ENCODE measurements at regions of chr14 and their contacts with region 1.

Region 1: GRCh38 chr14:60064491-60065072 is 27.1 kb upstream of the PCNX4 start:
- DNase-seq: peak; percentile 55
- ATAC-seq: peak; percentile 74
- H3K4me3 ChIP-seq: no peak overlapping the region
- H3K27ac ChIP-seq: no peak overlapping the region
- H3K4me1 ChIP-seq: no peaks in the 10 kb centered on the region
- H3K27me3 ChIP-seq: no peaks in the 10 kb centered on the region; the same call in 1 of the 2 replicates
- CTCF ChIP-seq: peak; percentile 74
- POLR2A ChIP-seq: no peak
- RAD21 ChIP-seq: peak; percentile 76

Region 2: DNA sequence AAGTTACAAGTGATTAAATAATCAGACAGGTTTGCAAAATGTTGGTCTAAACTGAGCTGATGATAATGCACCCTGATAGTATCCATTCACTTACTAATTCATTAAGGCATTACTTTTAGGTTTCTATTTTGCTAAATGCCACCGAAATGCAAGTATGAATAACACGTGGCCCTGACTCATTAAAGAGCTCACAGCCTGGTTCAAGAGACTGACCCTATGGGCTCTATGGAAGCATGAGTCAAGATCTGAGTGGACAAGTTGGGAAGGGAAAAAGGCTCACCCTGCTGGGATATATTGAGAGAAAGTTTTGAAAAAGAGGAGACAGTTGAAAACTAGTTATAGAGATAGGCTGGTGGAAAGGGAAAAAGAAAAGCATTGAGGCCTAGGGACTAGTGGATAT is 159.4 kb before region 1 on chr14:
- CTCF ChIA-PET with region 1: no interaction called
- POLR2A ChIA-PET with region 1: no interaction called
- dilution Hi-C with region 1: no loop called
- in situ Hi-C with region 1: no loop called
- intact Hi-C with region 1: no loop called
- DNase-seq: peak; percentile 13
- ATAC-seq: no peak
- H3K4me3 ChIP-seq: no peak overlapping the region
- H3K27ac ChIP-seq: no peak overlapping the region
- H3K4me1 ChIP-seq: no peaks in the 10 kb centered on the region
- H3K27me3 ChIP-seq: no peaks in the 10 kb centered on the region
- CTCF ChIP-seq: no peak
- POLR2A ChIP-seq: no peak
- RAD21 ChIP-seq: no peak

Region 3: GRCh38 chr14:59964251-59965007 is 100.2 kb before region 1 on chr14:
- CTCF ChIA-PET with region 1: no interaction called
- POLR2A ChIA-PET with region 1: no interaction called
- dilution Hi-C with region 1: no loop called
- in situ Hi-C with region 1: no loop called
- intact Hi-C with region 1: loop called (anchors 10 kb)
- DNase-seq: peak; percentile 31
- ATAC-seq: peak; percentile 69
- H3K4me3 ChIP-seq: no peak overlapping the region
- H3K27ac ChIP-seq: no peak overlapping the region
- H3K4me1 ChIP-seq: no peaks in the 10 kb centered on the region
- H3K27me3 ChIP-seq: no peaks in the 10 kb centered on the region
- CTCF ChIP-seq: no peak
- POLR2A ChIP-seq: no peak
- RAD21 ChIP-seq: no peak

Region 4: GRCh38 chr14:60014402-60014801 is 50.2 kb before region 1 on chr14:
- CTCF ChIA-PET with region 1: no interaction called
- POLR2A ChIA-PET with region 1: no interaction called
- dilution Hi-C with region 1: no loop called
- in situ Hi-C with region 1: no loop called
- intact Hi-C with region 1: no loop called
- DNase-seq: no peak
- ATAC-seq: no peak
- H3K4me3 ChIP-seq: no peak overlapping the region
- H3K27ac ChIP-seq: no peak overlapping the region
- H3K4me1 ChIP-seq: no peaks in the 10 kb centered on the region
- H3K27me3 ChIP-seq: no peaks in the 10 kb centered on the region
- CTCF ChIP-seq: no peak
- POLR2A ChIP-seq: no peak
- RAD21 ChIP-seq: no peak

Region 5: GRCh38 chr14:60164712-60165546 is 100.3 kb after region 1 on chr14 and contains the start of gene DHRS7:
- CTCF ChIA-PET with region 1: interaction called, 11 read pairs
- POLR2A ChIA-PET with region 1: interaction called, 5 read pairs
- dilution Hi-C with region 1: no loop called
- in situ Hi-C with region 1: no loop called
- intact Hi-C with region 1: loop called (anchors 1 kb)
- DNase-seq: peak; percentile 71
- ATAC-seq: peak; percentile 99
- H3K4me3 ChIP-seq: peak within 1 kb of the TSS; percentile 98
- H3K27ac ChIP-seq: peak within 1 kb of the TSS; percentile 82
- H3K4me1 ChIP-seq: peaks cover 6% of the 10 kb centered on the region
- H3K27me3 ChIP-seq: no peaks in the 10 kb centered on the region
- CTCF ChIP-seq: peak; percentile 49
- POLR2A ChIP-seq: peak; percentile 69
- RAD21 ChIP-seq: peak; percentile 52
- total RNA-seq, gene DHRS7: 50.2 and 56.7 TPM in 2 replicates

Region 6: DNA sequence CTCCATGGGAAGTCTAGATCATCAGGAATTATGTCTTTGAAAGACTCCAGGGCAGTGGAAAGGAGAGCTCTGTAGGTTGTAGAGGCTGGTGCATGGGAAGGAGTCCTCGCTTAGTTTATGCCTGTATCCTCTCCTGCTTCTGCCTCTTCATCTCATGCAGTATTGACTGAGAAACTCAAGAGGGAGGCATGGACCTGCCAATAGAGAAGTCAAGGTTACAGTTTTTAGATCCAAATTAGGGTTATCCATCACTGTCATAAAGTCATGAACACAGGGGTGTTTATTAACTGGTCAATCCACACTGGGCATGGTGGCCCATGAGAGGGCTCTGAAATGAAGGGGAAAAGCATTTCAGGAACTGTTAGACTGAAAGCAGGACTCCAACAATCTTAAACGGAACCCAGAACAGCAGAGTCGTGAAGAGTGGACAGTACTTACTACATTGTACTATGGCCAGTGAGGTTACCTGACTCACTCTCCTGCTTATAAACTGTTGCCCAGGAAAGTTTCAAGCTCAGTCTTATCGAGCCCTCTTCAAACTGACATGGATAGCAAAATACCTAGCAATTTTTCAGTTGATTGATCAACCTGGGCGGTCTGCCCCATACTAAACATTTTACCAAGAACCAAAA is 130.7 kb after region 1 on chr14:
- CTCF ChIA-PET with region 1: no interaction called
- POLR2A ChIA-PET with region 1: no interaction called
- dilution Hi-C with region 1: no loop called
- in situ Hi-C with region 1: no loop called
- intact Hi-C with region 1: no loop called
- DNase-seq: no peak
- ATAC-seq: no peak
- H3K4me3 ChIP-seq: no peak overlapping the region
- H3K27ac ChIP-seq: no peak overlapping the region
- H3K4me1 ChIP-seq: no peaks in the 10 kb centered on the region
- H3K27me3 ChIP-seq: peaks cover 5% of the 10 kb centered on the region
- CTCF ChIP-seq: no peak
- POLR2A ChIP-seq: no peak
- RAD21 ChIP-seq: no peak

Region 7: DNA sequence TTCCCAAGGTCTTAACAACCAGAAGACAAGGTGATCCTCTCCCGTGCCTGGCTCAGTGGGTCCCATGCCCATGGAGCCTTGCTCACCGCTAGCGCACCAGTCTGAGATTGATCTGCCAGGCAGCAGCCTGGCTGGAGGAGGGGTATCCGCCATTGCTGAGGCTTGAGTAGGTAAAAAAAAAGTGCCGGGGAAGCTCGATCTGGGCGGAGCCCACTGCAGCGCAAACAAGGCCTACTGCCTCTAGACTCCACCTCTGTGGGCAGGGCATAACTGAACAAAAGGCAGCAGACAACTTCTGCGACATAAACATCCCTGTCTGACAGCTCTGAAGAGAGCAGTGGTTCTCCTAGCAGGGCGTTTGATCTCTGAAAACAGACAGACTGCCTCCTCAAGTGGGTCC is 317.3 kb after region 1 on chr14:
- CTCF ChIA-PET with region 1: no interaction called
- POLR2A ChIA-PET with region 1: interaction called, 15 read pairs
- dilution Hi-C with region 1: no loop called
- in situ Hi-C with region 1: no loop called
- intact Hi-C with region 1: no loop called
- DNase-seq: no peak
- ATAC-seq: no peak
- H3K4me3 ChIP-seq: no peak overlapping the region
- H3K27ac ChIP-seq: no peak overlapping the region
- H3K4me1 ChIP-seq: no peaks in the 10 kb centered on the region
- H3K27me3 ChIP-seq: no peaks in the 10 kb centered on the region
- CTCF ChIP-seq: no peak
- POLR2A ChIP-seq: no peak
- RAD21 ChIP-seq: no peak

Region 8: GRCh38 chr14:60561845-60562746 is 497.5 kb after region 1 on chr14:
- CTCF ChIA-PET with region 1: no interaction called
- POLR2A ChIA-PET with region 1: no interaction called
- dilution Hi-C with region 1: no loop called
- in situ Hi-C with region 1: loop called (anchors 25 kb)
- intact Hi-C with region 1: loop called (anchors 5 kb)
- DNase-seq: peak; percentile 82
- ATAC-seq: peak; percentile 89
- H3K4me3 ChIP-seq: no peak overlapping the region
- H3K27ac ChIP-seq: no peak overlapping the region
- H3K4me1 ChIP-seq: 0 out of 2 replicates have a peak, but pooled peaks cover 1% of the 10 kb centered on the region
- H3K27me3 ChIP-seq: no peaks in the 10 kb centered on the region
- CTCF ChIP-seq: peak; percentile 80
- POLR2A ChIP-seq: no peak
- RAD21 ChIP-seq: peak; percentile 79

Region 9: GRCh38 chr14:61444215-61444768 is 1379.7 kb after region 1 on chr14:
- CTCF ChIA-PET with region 1: no interaction called
- POLR2A ChIA-PET with region 1: no interaction called
- dilution Hi-C with region 1: no loop called
- in situ Hi-C with region 1: no loop called
- intact Hi-C with region 1: no loop called
- DNase-seq: no peak
- ATAC-seq: no peak
- H3K4me3 ChIP-seq: no peak overlapping the region
- H3K27ac ChIP-seq: no peak overlapping the region
- H3K4me1 ChIP-seq: peaks cover 2% of the 10 kb centered on the region
- H3K27me3 ChIP-seq: peaks cover 39% of the 10 kb centered on the region
- CTCF ChIP-seq: no peak
- POLR2A ChIP-seq: no peak
- RAD21 ChIP-seq: no peak

Measured in IMR-90 (cell line).